ENCODE measurements at regions of chr11 and their contacts with region 1.

Region 1: DNA sequence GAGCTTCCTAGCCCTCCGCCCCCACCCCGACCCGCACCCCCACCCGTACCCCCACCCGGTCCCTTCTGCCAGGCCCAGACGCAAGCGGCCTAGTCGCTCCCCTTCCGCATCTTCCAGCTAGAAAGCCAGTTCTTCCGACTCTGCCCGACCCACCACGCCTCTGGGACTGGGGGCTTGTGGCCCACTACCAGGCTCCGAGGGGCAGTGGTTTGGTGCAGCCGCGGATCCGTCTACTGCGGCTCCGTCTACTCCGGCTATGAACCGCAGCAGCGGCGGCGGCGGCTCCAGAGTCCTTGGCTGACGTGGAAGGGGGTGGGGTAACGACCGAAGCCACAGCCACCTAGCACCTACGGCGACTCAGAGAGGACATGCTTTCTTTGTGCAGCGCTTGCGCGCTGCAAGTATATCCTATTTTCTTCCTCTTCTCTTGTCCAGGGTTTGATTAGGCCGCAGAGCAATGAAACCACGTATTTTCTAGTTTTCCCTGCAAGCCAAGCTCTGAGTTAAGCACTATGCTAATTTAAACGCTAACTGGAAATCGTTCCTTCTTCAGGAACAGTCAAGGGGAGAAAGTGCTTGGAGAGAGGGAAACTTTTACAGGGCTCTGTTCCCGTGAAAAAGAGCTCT is at the start of gene COPB1:
- DNase-seq: peak; percentile 97
- total RNA-seq, gene COPB1: 61.4 TPM

Region 2: GRCh38 chr11:14519917-14520746 is 20.5 kb after region 1 on chr11 and contains the start of gene PSMA1:
- intact Hi-C with region 1: loop called (anchors 1 kb)
- DNase-seq: peak; percentile 98
- total RNA-seq, gene PSMA1: 136 TPM

Measured in cardiac septum (tissue), 1 donor.